H1 (cell line): ENCODE measurements at regions of chr9 and their contacts with region 1.

Region 1: GRCh38 chr9:1837449-1838084 is 177.6 kb upstream of the SMARCA2 start:
- DNase-seq: peak; percentile 46 to 61
- H3K4me3 ChIP-seq: no peak overlapping the region
- H3K27ac ChIP-seq: no peak overlapping the region
- H3K4me1 ChIP-seq: no peaks in the 10 kb centered on the region; a peak in 1 of 7 replicates
- H3K27me3 ChIP-seq: no peaks in the 10 kb centered on the region
- CTCF ChIP-seq: peak; percentile 71 to 89 (median 79)
- EP300 ChIP-seq: no peak
- POLR2A ChIP-seq: no peak
- RAD21 ChIP-seq: peak; percentile 82 to 89

Region 2: GRCh38 chr9:1709345-1709744 is 128.2 kb before region 1 on chr9:
- CTCF ChIA-PET with region 1: interaction called, 11 read pairs
- POLR2A ChIA-PET with region 1: no interaction called
- DNase-seq: no peak
- H3K4me3 ChIP-seq: no peak overlapping the region
- H3K27ac ChIP-seq: no peak overlapping the region
- H3K4me1 ChIP-seq: no peaks in the 10 kb centered on the region
- H3K27me3 ChIP-seq: no peaks in the 10 kb centered on the region
- CTCF ChIP-seq: peak in 2 of 3 experiments; percentile 9 to 26; a peak in 1 of 4 replicates
- EP300 ChIP-seq: no peak
- POLR2A ChIP-seq: no peak
- RAD21 ChIP-seq: peak; percentile 19 to 43; a peak in 3 of 4 replicates

Region 3: GRCh38 chr9:1726993-1727759 is 110.4 kb before region 1 on chr9:
- CTCF ChIA-PET with region 1: interaction called, 53 read pairs
- POLR2A ChIA-PET with region 1: interaction called, 3 read pairs
- DNase-seq: no peak
- H3K4me3 ChIP-seq: no peak overlapping the region
- H3K27ac ChIP-seq: no peak overlapping the region
- H3K4me1 ChIP-seq: peaks cover 0 to 6% (median 2%) of the 10 kb centered on the region in 4 experiments; a peak in 3 of 7 replicates
- H3K27me3 ChIP-seq: no peaks in the 10 kb centered on the region
- CTCF ChIP-seq: peak in 2 of 3 experiments; percentile 52 to 60; a peak in 3 of 4 replicates
- EP300 ChIP-seq: no peak
- POLR2A ChIP-seq: no peak
- RAD21 ChIP-seq: peak; percentile 73 to 77

Region 4: GRCh38 chr9:1804128-1804865 is 33.3 kb before region 1 on chr9:
- CTCF ChIA-PET with region 1: no interaction called
- POLR2A ChIA-PET with region 1: no interaction called
- DNase-seq: no peak
- H3K4me3 ChIP-seq: no peak overlapping the region
- H3K27ac ChIP-seq: no peak overlapping the region
- H3K4me1 ChIP-seq: no peaks in the 10 kb centered on the region
- H3K27me3 ChIP-seq: no peaks in the 10 kb centered on the region
- CTCF ChIP-seq: no peak
- EP300 ChIP-seq: no peak
- POLR2A ChIP-seq: no peak
- RAD21 ChIP-seq: no peak

Region 5: GRCh38 chr9:1857808-1858207 is 20.2 kb after region 1 on chr9:
- CTCF ChIA-PET with region 1: interaction called, 11 read pairs
- POLR2A ChIA-PET with region 1: no interaction called
- DNase-seq: no peak
- H3K4me3 ChIP-seq: no peak overlapping the region
- H3K27ac ChIP-seq: no peak overlapping the region
- H3K4me1 ChIP-seq: no peaks in the 10 kb centered on the region; a peak in 1 of 7 replicates
- H3K27me3 ChIP-seq: no peaks in the 10 kb centered on the region; a peak in 1 of 7 replicates
- CTCF ChIP-seq: no peak
- EP300 ChIP-seq: no peak
- POLR2A ChIP-seq: no peak
- RAD21 ChIP-seq: no peak

Region 6: DNA sequence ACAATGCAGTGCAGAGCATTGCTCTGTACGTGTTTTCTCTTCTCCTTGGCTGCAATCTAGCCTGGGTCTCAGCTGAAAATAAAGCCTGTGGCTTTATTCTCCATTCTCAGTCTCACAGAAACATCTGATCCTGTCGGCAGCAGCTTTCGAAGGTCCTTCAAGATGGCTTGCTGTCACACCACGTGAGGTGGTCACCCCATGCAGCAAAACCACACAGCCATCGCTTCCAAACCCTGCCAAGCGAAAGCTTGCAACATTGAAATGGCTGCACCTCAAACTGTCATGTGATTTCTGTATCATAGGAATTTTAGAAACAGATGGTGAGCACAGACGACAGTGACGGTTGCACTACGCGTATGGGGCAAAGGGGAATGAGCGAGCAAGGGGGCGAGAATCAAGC is 79.1 kb after region 1 on chr9:
- CTCF ChIA-PET with region 1: interaction called, 12 read pairs
- POLR2A ChIA-PET with region 1: no interaction called
- DNase-seq: no peak
- H3K4me3 ChIP-seq: no peak overlapping the region
- H3K27ac ChIP-seq: no peak overlapping the region
- H3K4me1 ChIP-seq: peaks cover 2 to 7% (median 3%) of the 10 kb centered on the region in 4 experiments; a peak in 4 of 7 replicates
- H3K27me3 ChIP-seq: no peaks in the 10 kb centered on the region
- CTCF ChIP-seq: no peak
- EP300 ChIP-seq: no peak
- POLR2A ChIP-seq: no peak
- RAD21 ChIP-seq: no peak

Region 7: DNA sequence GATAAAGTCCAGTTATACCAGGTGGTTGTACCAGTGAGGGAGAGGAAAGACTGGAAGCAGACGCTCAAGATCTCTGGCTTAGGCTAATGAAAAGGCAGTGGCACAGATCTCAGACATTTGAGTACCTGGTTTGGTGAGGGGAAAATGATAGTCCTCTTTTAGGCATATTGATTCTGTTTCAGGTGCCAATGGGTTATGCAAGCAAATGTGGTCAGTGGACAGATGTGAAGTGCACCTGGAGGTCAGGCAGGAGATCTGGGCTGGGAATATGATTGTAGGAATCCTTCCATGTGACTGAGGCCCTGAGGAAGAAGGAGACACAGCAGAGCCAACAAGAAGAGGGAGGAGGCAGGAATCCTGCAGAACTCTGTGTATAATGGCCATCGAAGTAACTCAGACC is 113.9 kb after region 1 on chr9:
- CTCF ChIA-PET with region 1: no interaction called
- POLR2A ChIA-PET with region 1: no interaction called
- DNase-seq: no peak
- H3K4me3 ChIP-seq: no peak overlapping the region
- H3K27ac ChIP-seq: no peak overlapping the region
- H3K4me1 ChIP-seq: peaks cover 0 to 17% (median 7%) of the 10 kb centered on the region in 4 experiments; a peak in 4 of 7 replicates
- H3K27me3 ChIP-seq: no peaks in the 10 kb centered on the region
- CTCF ChIP-seq: no peak
- EP300 ChIP-seq: no peak
- POLR2A ChIP-seq: no peak
- RAD21 ChIP-seq: no peak